Breast epithelium (tissue), 4 donors: ENCODE measurements at regions of chr20 and their contacts with region 1.

Region 1: DNA sequence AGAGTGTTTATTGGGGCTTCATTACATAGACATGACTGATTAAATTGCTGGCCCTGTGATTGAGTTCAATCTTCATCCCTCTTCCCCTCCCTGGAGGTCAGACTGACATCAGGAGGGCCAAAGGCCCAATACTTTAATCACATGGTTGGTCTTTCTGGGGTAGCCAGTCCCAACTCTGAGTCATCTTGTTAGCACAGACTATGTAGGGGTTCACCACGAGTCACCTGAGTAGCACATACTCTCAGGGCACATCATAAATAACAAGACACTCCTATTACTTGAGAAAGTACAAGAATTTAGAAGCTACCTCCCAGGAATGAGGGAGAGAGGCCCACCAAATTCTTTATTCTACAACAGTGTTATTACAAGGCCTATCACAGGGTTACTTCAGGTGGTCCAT is 11.3 kb downstream of the GINS1 start:
- DNase-seq: no peak
- H3K4me3 ChIP-seq: no peak overlapping the region
- H3K27ac ChIP-seq: no peak overlapping the region
- H3K4me1 ChIP-seq: no peaks in the 10 kb centered on the region
- H3K27me3 ChIP-seq: no peaks in the 10 kb centered on the region
- CTCF ChIP-seq: no peak
- POLR2A ChIP-seq: no peak

Region 2: DNA sequence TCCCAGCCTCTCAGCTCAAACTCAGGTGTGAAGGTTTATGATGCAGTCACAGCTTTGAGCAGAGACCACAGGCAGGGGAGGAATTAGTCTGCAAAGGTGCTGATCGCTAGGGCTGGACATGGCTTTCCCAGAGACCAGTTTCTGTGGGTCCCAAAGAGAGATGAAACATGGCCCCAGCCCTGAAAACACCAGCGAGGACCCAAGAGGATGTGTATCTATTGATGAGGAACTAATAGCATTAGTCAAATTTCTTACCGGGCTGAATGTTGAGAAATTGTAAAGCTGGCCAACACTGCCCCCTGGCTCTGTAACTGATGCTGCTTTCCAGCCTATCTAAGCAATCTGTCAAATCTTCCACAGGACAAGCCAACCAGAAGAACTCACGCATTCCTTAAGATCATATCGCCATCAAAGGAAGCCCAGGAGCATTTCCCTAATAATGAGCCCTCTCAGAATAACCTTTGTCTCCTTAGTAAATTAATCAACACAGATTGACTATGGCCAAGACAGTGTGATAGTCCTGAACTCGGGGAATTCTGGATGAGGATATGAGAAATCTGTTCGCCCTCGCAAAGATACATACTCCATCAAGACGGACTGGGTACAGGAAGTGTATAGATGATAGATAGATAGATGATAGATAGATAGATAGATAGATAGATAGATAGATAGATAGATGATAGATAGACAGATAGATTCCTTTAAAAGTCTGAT is 353.0 kb before region 1 on chr20:
- intact Hi-C with region 1: loop called (anchors 10 kb)
- DNase-seq: peak in 1 of 2 donors; percentile 58
- H3K4me3 ChIP-seq: no peak overlapping the region
- H3K27ac ChIP-seq: no peak overlapping the region
- H3K4me1 ChIP-seq: no peaks in the 10 kb centered on the region
- H3K27me3 ChIP-seq: peaks cover 0 to 13% of the 10 kb centered on the region in 2 donors
- CTCF ChIP-seq: peak; percentile 71 to 90 (median 89)
- POLR2A ChIP-seq: no peak

Region 3: DNA sequence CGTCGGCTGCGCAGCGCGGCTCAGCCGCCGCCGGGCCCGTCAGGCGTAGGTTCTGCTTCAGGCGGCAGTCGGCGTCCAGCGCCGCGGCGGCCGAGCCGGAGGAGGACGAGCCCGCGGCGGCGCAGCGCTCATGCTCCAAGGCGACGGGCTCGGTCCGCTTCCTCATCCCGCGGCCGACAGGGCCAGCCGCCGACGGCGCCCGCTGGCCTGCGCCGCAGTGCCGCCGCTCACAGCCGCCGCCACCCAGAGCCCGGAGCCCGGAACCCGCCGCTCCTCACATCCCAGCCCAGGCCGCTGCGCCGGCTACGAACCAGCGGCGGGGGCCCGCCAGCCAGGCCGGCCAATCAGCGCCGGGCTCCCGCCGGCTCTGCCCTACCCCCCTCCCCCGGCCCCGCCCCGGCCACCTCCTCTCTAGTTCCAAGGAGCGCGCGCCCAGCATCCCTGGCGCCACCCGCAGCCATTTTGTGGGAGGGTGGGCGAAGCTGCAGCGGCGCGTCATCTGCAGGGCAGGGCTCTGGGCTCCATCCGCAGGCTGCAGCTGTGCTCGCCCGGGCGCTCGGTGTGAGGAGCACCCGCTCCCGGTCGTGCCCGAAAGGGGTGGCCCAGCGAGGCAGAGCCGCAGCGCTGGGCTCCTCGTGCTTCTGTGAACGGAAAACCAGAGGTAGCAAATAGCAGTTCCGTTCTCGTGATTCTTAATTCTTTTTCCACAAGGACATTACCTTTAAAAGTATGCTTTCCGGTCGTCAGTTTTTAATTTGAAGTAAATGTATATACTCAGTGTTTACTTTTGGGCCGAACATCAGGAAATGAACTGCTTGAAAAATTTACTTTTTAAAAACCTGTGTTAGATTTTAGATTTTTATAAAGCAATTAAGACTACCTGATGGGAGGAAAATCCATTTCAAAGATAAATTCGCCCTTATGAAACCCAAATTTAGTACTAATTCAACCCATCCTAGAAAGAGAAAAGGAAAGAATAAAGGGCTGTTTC is 27.9 kb before region 1 on chr20 and contains the start of gene ABHD12:
- intact Hi-C with region 1: no loop called
- DNase-seq: peak; percentile 93 to 95
- H3K4me3 ChIP-seq: peak within 1 kb of the TSS; percentile 81 to 98 (median 89)
- H3K27ac ChIP-seq: peak within 1 kb of the TSS; percentile 88 to 93
- H3K4me1 ChIP-seq: no peaks in the 10 kb centered on the region
- H3K27me3 ChIP-seq: no peaks in the 10 kb centered on the region
- CTCF ChIP-seq: no peak
- POLR2A ChIP-seq: no peak
- total RNA-seq, gene ABHD12: 26.9 to 67.7 (median 53.4) TPM

Region 4: DNA sequence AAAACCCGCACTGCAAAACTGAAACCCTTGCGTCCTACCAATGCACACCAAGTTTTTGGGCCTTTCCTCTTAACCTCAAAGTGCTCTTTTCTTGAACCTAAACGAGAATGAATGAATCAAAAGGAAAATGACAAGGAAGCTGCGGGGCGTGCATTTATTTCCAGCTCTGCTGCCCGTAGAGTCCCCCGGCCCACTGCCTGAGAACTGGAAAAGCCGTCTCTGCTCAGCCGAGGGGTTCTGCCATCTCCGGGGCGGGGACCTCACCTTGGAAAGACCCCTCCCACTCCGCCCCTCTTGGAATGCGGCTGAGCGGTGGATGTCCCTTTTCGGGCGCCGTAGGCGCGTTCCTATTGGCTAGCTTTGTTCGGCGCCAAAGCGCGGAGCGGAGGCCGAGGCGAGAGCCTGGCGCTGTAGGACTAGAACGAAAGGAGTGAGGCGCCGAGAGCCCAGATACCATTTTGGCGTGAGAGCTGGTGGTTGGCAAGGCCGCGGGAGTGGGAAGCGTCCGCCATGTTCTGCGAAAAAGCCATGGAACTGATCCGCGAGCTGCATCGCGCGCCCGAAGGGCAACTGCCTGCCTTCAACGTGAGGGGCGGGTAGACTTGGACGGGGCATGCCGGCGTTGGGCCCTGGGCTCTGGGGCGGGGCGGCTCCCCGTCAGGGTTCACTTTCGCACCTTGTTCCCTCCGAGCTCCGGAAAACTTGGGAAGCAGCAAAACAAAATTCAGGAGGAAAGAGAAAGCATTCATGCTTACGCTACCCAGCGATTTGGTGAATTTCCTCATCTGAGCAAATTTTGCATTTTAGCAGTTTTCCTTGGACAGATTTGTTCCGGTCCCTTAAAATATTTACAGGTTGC is 11.2 kb before region 1 on chr20 and contains the start of gene GINS1:
- intact Hi-C with region 1: loop called (anchors 1 kb)
- DNase-seq: peak; percentile 50 to 75
- H3K4me3 ChIP-seq: peak within 1 kb of the TSS; percentile 52 to 77 (median 65)
- H3K27ac ChIP-seq: peak within 1 kb of the TSS in 1 of 2 donors; percentile 39
- H3K4me1 ChIP-seq: no peaks in the 10 kb centered on the region
- H3K27me3 ChIP-seq: no peaks in the 10 kb centered on the region
- CTCF ChIP-seq: no peak
- POLR2A ChIP-seq: no peak
- total RNA-seq, gene GINS1: 0.32 to 0.73 (median 0.33) TPM

Region 5: GRCh38 chr20:25478889-25479568 is 60.3 kb after region 1 on chr20:
- intact Hi-C with region 1: loop called (anchors 2 kb)
- DNase-seq: no peak
- H3K4me3 ChIP-seq: no peak overlapping the region
- H3K27ac ChIP-seq: no peak overlapping the region
- H3K4me1 ChIP-seq: no peaks in the 10 kb centered on the region
- H3K27me3 ChIP-seq: no peaks in the 10 kb centered on the region
- CTCF ChIP-seq: no peak
- POLR2A ChIP-seq: no peak